ENCODE measurements at regions of chr16 and their contacts with region 1.

Region 1: DNA sequence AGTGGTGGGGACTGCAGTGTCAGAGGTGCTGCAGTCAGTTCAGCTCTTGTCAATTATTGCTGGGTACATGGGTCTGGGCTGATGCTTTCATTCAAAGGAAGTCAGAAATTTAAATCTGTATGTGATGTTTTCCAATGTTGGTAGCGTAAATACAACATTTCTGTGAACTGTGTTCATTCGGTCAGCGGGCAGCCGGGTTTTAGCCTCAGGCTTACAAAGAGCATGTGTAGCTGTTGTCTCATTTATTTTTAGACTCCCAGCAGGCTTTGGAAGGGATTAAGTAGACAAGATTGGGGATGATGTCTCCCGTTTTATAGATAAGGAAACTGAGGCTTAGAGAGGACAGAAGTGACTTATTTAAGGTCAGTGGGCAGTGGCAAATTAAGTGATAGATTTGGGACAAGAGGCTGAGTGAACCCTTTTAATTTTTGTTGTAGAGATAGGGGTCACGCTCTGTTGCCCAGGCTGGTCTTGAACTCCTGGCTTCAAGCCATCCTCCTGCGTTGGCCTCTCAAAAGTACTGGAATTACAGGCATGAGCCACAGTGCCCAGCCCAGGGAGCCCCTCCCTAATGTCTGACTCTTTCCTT is 8.1 kb downstream of the AQP8 start:
- DNase-seq: no peak
- H3K4me3 ChIP-seq: no peak overlapping the region
- H3K27ac ChIP-seq: no peak overlapping the region
- H3K4me1 ChIP-seq: peaks cover 0 to 8% (median 3%) of the 10 kb centered on the region in 6 donors
- H3K27me3 ChIP-seq: no peaks in the 10 kb centered on the region
- CTCF ChIP-seq: no peak
- POLR2A ChIP-seq: no peak

Region 2: GRCh38 chr16:25051406-25052150 is 173.2 kb before region 1 on chr16:
- intact Hi-C with region 1: loop called (anchors 5 kb)
- DNase-seq: no peak
- H3K4me3 ChIP-seq: peak overlapping the region in 3 of 8 donors; percentile 9 to 48 (median 16)
- H3K27ac ChIP-seq: peak overlapping the region; percentile 0 to 97 (median 82)
- H3K4me1 ChIP-seq: peaks cover 21 to 74% (median 42%) of the 10 kb centered on the region in 6 donors
- H3K27me3 ChIP-seq: no peaks in the 10 kb centered on the region
- CTCF ChIP-seq: no peak
- POLR2A ChIP-seq: no peak

Region 3: GRCh38 chr16:25126820-25127232 is 98.0 kb before region 1 on chr16:
- intact Hi-C with region 1: loop called (anchors 10 kb)
- DNase-seq: no peak
- H3K4me3 ChIP-seq: no peak overlapping the region
- H3K27ac ChIP-seq: no peak overlapping the region
- H3K4me1 ChIP-seq: peaks cover 0 to 43% (median 19%) of the 10 kb centered on the region in 6 donors
- H3K27me3 ChIP-seq: no peaks in the 10 kb centered on the region
- CTCF ChIP-seq: peak in 5 of 11 experiments; percentile 14 to 55 (median 37)
- POLR2A ChIP-seq: no peak

Measured in spleen (tissue), 13 donors.